ENCODE measurements at regions of chr18 and their contacts with region 1.

Region 1: GRCh38 chr18:23814991-23815614 is 125.8 kb downstream of the LAMA3 start:
- DNase-seq: no peak
- H3K4me3 ChIP-seq: no peak overlapping the region
- H3K27ac ChIP-seq: no peak overlapping the region
- H3K27me3 ChIP-seq: peaks cover 23% of the 10 kb centered on the region
- CTCF ChIP-seq: no peak

Region 2: GRCh38 chr18:23640023-23640422 is 175.1 kb before region 1 on chr18:
- CTCF ChIA-PET with region 1: interaction called, 10 read pairs
- POLR2A ChIA-PET with region 1: no interaction called
- DNase-seq: no peak
- H3K4me3 ChIP-seq: no peak overlapping the region
- H3K27ac ChIP-seq: no peak overlapping the region
- H3K27me3 ChIP-seq: peaks cover 48% of the 10 kb centered on the region
- CTCF ChIP-seq: no peak